Dorsolateral prefrontal cortex (tissue), 120 donors: ENCODE measurements at regions of chr13 and their contacts with region 1.

Region 1: GRCh38 chr13:85313761-85314503 is 485.3 kb downstream of the SLITRK6 start:
- DNase-seq: no peak
- H3K4me3 ChIP-seq: no peak overlapping the region
- H3K27ac ChIP-seq: no peak overlapping the region
- H3K27me3 ChIP-seq: no peaks in the 10 kb centered on the region
- CTCF ChIP-seq: no peak

Region 2: DNA sequence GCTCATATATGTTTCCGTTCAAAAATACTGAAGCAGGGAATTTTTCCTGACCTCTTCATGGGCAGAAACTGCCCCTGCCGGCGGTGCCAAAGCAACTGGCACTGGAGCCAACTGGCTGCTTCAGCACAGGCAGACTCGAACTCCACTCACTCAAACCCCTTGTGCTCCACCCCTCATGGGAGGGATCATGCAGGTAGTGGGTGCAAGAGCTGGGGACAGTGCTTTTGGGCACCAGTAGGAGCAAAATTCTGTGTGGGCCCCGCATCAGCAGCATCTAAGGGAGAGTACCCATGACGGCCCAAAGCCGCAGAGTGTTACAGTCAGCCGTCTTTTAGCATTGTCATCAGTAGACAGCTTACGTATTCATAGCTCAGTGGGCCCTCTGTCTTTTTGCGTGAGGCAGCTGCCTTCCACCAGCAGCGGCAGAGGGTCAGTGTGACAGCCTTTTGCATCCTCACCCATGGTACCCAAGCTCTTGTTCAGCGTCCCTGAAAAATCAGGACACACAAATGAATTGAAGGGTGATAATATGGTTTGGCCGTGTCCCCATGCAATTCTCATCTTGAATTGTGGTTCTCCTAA is 91.5 kb after region 1 on chr13:
- intact Hi-C with region 1: loop called in 1 of 2 experiments (anchors 5 kb)
- DNase-seq: peak in 8 of 10 donors; percentile 20 to 59 (median 42)
- H3K4me3 ChIP-seq: peak overlapping the region in 19 of 59 donors; percentile 1 to 46 (median 25)
- H3K27ac ChIP-seq: peak overlapping the region in 58 of 59 donors; percentile 2 to 95 (median 88)
- H3K27me3 ChIP-seq: no peaks in the 10 kb centered on the region
- CTCF ChIP-seq: peak in 20 of 56 donors; percentile 3 to 44 (median 14)

Region 3: DNA sequence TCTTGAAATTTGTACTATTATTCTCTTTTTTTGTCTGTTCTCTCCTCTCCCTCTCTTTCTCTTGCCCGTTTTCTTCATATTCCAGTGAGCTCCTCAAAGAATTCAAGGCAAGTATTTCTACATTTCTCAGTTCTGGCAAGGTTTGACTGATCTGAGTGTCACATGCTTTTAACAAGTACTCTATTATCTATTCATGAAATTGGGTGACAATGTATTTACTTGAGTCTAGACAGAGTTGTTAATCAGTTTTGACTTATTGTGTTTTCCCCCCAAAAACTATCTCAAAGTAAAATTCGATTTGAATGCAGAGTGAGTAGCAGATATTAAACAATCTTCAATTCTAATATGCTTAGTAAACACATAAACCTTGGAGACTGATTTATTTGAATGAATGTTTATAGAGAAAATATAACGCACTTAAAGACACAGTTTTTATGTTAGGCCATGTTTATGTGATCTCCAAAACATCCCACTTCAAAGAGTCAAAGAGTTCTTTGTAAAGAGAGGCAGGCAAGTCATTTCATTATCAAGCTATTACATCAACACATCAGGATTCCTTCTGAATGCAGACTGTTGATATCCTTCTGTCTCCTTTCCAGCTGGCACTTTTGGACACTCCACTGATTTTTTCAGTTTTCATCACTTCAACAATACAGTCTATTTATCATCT is 318.7 kb after region 1 on chr13:
- intact Hi-C with region 1: loop called in 1 of 2 experiments (anchors 5 kb)
- DNase-seq: no peak
- H3K4me3 ChIP-seq: peak overlapping the region in 2 of 59 donors; percentile 10 to 24
- H3K27ac ChIP-seq: peak overlapping the region in 3 of 59 donors; percentile 43 to 61 (median 51)
- H3K27me3 ChIP-seq: no peaks in the 10 kb centered on the region
- CTCF ChIP-seq: no peak